Activated B cell treated with CpG ODN at 0.5 μM for 24 hours (primary cell): ENCODE measurements at regions of chr4 and their contacts with region 1.

Region 1: GRCh38 chr4:13548984-13549546 is 4.8 kb upstream of the NKX3-2 start:
- DNase-seq: peak; percentile 77
- ATAC-seq: peak; percentile 59
- H3K4me3 Mint-ChIP-seq: peak overlapping the region; percentile 62
- H3K27ac Mint-ChIP-seq: peak overlapping the region; percentile 9
- H3K4me1 Mint-ChIP-seq: peaks cover 30% of the 10 kb centered on the region
- H3K27me3 Mint-ChIP-seq: peaks cover 50% of the 10 kb centered on the region
- CTCF ChIP-seq: peak; percentile 86

Region 2: GRCh38 chr4:12633053-12633651 is 915.9 kb before region 1 on chr4:
- CTCF ChIA-PET with region 1: no interaction called
- POLR2A ChIA-PET with region 1: no interaction called
- intact Hi-C with region 1: loop called (anchors 1 kb)
- DNase-seq: peak; percentile 51
- ATAC-seq: peak; percentile 82
- H3K4me3 Mint-ChIP-seq: no peak overlapping the region
- H3K27ac Mint-ChIP-seq: no peak overlapping the region
- H3K4me1 Mint-ChIP-seq: no peaks in the 10 kb centered on the region
- H3K27me3 Mint-ChIP-seq: peaks cover 4% of the 10 kb centered on the region
- CTCF ChIP-seq: peak; percentile 17

Region 3: GRCh38 chr4:12852338-12853307 is 696.4 kb before region 1 on chr4:
- CTCF ChIA-PET with region 1: interaction called, 3 read pairs
- POLR2A ChIA-PET with region 1: no interaction called
- intact Hi-C with region 1: loop called (anchors 1 kb)
- DNase-seq: no peak
- ATAC-seq: no peak
- H3K4me3 Mint-ChIP-seq: no peak overlapping the region
- H3K27ac Mint-ChIP-seq: no peak overlapping the region
- H3K4me1 Mint-ChIP-seq: peaks cover 2% of the 10 kb centered on the region
- H3K27me3 Mint-ChIP-seq: peaks cover 5% of the 10 kb centered on the region
- CTCF ChIP-seq: no peak

Region 4: GRCh38 chr4:13527981-13528820 is 20.9 kb before region 1 on chr4:
- CTCF ChIA-PET with region 1: interaction called, 4 read pairs
- POLR2A ChIA-PET with region 1: no interaction called
- intact Hi-C with region 1: loop called (anchors 1 kb)
- DNase-seq: no peak
- ATAC-seq: peak; percentile 52
- H3K4me3 Mint-ChIP-seq: peak overlapping the region; percentile 62
- H3K27ac Mint-ChIP-seq: peak overlapping the region; percentile 19
- H3K4me1 Mint-ChIP-seq: peaks cover 28% of the 10 kb centered on the region
- H3K27me3 Mint-ChIP-seq: peaks cover 80% of the 10 kb centered on the region
- CTCF ChIP-seq: no peak

Region 5: DNA sequence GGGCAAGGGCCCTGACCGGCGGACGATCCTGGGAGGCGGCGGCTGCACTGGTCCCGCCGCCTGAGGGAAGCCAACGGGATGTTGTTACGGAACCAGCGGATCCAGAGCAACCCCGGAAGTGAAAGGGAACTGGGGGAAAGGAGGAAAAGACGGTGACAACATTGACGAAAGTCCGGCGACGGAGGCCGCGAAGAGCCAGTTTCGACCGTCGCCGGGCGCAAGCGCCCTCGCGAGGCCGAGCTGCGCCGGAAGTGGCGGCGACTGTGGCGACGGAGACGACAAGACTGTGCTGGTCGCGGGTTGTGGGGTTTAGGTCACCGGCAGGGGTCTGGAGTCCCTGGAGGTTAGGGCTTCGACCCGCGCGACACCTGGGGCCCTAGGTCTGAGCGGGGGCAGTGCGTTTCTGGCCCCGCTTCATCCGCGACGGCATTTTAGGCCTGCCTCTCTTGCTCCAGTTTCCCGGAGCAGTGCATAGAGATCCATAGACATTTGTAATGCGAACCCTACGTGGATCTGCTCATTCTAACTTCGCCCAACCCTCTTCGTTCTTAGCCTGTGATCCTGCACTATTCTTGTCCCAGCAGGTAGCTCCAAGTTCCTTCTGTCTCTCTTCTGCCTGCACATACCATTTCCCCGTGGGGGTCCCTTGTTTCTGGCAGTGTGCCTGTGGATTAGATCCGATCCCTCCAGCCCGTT is 78.7 kb after region 1 on chr4 and contains the start of gene BOD1L1:
- CTCF ChIA-PET with region 1: no interaction called
- POLR2A ChIA-PET with region 1: no interaction called
- intact Hi-C with region 1: loop called (anchors 5 kb)
- DNase-seq: peak; percentile 80
- ATAC-seq: peak; percentile 86
- H3K4me3 Mint-ChIP-seq: peak within 1 kb of the TSS; percentile 98
- H3K27ac Mint-ChIP-seq: peak within 1 kb of the TSS; percentile 97
- H3K4me1 Mint-ChIP-seq: peaks cover 53% of the 10 kb centered on the region
- H3K27me3 Mint-ChIP-seq: no peaks in the 10 kb centered on the region
- CTCF ChIP-seq: no peak
- total RNA-seq, gene BOD1L1: 77.1 and 79.3 TPM in 2 replicates